Left lung (tissue), 14 donors: ENCODE measurements at regions of chr5 and their contacts with region 1.

Region 1: DNA sequence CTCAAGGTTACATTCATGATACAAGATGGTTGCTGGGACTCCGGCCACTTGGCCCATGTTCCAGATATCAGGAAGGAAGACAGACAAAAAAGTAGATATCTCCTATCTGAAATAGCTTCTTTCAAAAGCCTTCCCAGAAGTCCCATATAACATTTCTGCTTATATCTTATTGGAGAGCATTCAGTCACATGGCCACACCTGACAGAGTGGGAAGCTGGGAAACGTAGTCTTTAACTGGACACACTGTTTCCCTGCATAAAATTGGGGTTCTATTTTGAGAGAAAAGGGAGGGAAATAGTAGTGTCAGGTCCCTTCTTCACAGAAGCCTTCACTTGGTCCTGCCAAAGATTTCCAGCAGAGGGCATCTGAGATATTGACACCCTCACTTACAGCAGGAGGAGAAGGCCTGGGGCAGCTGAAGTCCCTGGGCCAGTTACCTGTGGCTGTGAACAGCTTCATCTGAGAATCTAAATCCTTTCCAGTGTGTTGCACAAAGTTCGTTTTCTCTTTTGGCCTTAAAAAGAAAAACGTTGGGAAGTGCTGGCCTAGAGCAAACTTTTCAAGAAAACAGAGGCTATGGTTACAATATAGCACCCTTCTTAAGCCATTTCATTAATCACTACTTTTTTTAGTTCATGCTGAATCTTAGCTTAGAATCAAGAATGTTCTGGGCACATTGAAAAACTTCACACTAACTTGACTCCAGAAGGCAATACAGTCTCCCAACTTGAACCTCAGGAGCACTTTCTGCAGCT is 33.5 kb downstream of the SPEF2 start:
- DNase-seq: peak in 1 of 4 donors; percentile 6
- ATAC-seq: peak; percentile 57
- H3K4me3 ChIP-seq: no peak overlapping the region
- H3K27ac ChIP-seq: no peak overlapping the region
- H3K4me1 ChIP-seq: no peaks in the 10 kb centered on the region
- H3K27me3 ChIP-seq: no peaks in the 10 kb centered on the region
- CTCF ChIP-seq: peak; percentile 36 to 44

Region 2: DNA sequence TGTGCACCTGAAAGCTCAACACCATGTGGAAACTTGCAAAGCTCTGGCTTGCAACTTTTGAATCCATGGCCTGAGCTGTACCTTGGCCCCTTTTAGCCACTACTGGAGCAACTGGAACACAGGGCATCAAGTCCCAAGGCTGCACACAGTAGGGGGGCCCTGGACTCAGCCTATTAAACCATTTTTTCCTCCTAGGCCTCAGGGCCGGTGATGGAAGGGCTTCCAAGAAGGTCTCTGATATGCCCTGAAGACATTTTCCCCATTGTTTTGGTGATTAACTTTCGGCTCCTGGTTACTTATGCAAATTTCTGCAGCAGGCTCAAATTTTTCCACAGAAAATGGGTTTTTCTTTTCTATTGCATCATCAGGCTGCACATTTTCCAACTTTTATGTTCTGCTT is 398.2 kb before region 1 on chr5:
- intact Hi-C with region 1: no loop called
- DNase-seq: no peak
- ATAC-seq: no peak
- H3K4me3 ChIP-seq: no peak overlapping the region
- H3K27ac ChIP-seq: no peak overlapping the region
- H3K4me1 ChIP-seq: no peaks in the 10 kb centered on the region
- H3K27me3 ChIP-seq: no peaks in the 10 kb centered on the region
- CTCF ChIP-seq: no peak

Region 3: DNA sequence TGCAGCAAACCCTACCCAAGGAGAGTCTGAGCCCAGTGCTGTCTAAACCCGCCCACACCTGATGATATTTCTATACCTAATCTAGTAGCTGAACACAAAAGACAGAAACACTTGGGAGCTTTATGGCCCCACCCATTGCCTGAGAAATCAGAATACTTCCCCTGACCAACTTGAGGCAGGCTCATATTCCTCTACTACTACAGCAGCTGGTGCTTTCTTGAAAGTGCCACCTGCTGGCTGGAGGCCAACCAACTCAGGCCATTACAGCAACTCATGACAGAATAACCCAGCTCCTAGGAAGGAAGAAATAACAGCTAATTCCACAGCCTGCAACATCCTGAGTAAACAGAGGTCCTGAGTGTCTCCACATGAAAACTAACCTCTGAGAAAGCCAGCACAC is 207.0 kb before region 1 on chr5:
- intact Hi-C with region 1: no loop called
- DNase-seq: no peak
- ATAC-seq: no peak
- H3K4me3 ChIP-seq: no peak overlapping the region
- H3K27ac ChIP-seq: no peak overlapping the region
- H3K4me1 ChIP-seq: no peaks in the 10 kb centered on the region
- H3K27me3 ChIP-seq: no peaks in the 10 kb centered on the region
- CTCF ChIP-seq: no peak

Region 4: GRCh38 chr5:35543408-35543807 is 107.8 kb before region 1 on chr5:
- intact Hi-C with region 1: no loop called
- DNase-seq: no peak
- ATAC-seq: no peak
- H3K4me3 ChIP-seq: no peak overlapping the region
- H3K27ac ChIP-seq: no peak overlapping the region
- H3K4me1 ChIP-seq: no peaks in the 10 kb centered on the region
- H3K27me3 ChIP-seq: no peaks in the 10 kb centered on the region
- CTCF ChIP-seq: no peak

Region 5: DNA sequence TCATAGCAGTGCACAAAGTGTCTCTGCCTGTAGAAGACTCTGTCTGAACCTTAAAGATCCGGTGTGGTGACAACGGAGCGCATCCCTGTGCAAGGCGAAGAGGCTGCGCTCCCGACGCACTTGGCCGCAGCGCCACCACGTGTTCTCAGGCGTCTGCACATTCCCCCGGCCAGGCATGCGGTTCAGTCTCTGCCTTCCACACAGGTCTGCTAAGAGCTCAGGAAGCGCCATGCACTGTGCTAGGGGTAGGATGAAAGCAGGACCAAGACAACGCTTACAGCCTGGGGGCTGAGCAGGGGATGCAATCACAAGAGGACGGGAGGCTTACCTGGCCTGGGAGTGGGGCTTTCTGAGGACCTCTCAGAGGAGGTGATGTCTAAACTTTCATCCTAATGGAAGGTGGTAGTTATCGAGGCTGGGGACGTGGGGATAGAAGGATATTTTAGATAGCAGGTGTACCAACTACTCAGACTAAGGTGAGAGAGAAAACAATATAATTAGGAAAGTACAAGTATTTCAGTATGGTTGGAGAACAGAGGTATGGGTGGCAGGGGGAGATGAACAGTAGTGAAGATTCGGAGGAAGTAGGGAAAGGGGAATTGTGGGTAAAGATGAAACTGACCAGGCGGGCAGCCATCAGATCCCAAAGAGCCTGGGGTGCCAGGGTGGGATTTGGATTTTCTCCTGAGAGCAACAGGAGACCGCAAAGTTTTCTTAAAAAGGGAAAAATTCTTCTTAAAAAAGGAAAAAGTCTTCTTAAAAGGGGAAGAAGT is 274.0 kb after region 1 on chr5:
- intact Hi-C with region 1: loop called in 1 of 2 experiments (anchors 5 kb)
- DNase-seq: peak; percentile 42 to 89 (median 66)
- ATAC-seq: peak; percentile 87
- H3K4me3 ChIP-seq: peak overlapping the region in 1 of 2 donors; percentile 12
- H3K27ac ChIP-seq: no peak overlapping the region
- H3K4me1 ChIP-seq: peaks cover 7 to 19% of the 10 kb centered on the region in 2 donors
- H3K27me3 ChIP-seq: peaks cover 0 to 33% of the 10 kb centered on the region in 2 donors
- CTCF ChIP-seq: peak; percentile 30 to 46